ENCODE measurements at regions of chr5 and their contacts with region 1.

Region 1: DNA sequence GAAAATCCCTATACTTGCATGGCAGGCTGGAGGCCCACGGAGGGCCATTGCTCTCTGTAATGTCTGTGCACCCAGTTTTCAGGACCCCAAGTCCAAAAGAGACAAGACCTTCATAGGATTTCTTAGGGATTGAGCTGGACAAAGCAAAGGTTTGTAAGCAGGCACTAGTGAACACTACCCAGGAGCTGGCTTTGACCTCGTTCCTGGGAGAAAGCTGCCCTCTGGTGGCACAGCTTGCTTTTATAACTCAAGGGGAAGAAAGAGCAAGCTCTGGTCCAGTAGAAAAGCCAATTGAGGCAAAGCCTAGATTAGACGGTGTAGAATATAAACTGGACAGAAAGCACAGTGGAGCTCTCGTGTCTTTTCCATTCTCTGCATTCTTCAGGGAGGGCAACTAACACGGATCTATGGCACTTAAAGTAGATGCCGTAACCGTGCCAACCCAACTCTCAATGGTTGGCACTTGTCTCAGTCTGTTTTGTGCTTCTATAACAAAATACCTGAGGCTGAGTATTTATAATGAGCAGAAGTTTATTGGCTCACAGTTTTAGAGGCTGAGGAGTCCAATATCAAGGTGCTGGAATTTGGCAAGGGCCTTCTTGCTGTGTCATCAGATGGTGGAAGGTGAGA is 7.9 kb downstream of the GABRP start:
- DNase-seq: peak; percentile 49 to 74 (median 59)
- H3K4me3 ChIP-seq: no peak overlapping the region
- H3K27ac ChIP-seq: no peak overlapping the region
- H3K4me1 ChIP-seq: no peaks in the 10 kb centered on the region
- H3K27me3 ChIP-seq: peaks cover 0 to 3% (median 0%) of the 10 kb centered on the region in 5 experiments

Region 2: GRCh38 chr5:170591054-170591453 is 200.4 kb before region 1 on chr5:
- CTCF ChIA-PET with region 1: no interaction called
- POLR2A ChIA-PET with region 1: no interaction called
- DNase-seq: no peak
- H3K4me3 ChIP-seq: no peak overlapping the region
- H3K27ac ChIP-seq: no peak overlapping the region
- H3K4me1 ChIP-seq: no peaks in the 10 kb centered on the region
- H3K27me3 ChIP-seq: peaks cover 0 to 3% (median 0%) of the 10 kb centered on the region in 5 experiments

Region 3: DNA sequence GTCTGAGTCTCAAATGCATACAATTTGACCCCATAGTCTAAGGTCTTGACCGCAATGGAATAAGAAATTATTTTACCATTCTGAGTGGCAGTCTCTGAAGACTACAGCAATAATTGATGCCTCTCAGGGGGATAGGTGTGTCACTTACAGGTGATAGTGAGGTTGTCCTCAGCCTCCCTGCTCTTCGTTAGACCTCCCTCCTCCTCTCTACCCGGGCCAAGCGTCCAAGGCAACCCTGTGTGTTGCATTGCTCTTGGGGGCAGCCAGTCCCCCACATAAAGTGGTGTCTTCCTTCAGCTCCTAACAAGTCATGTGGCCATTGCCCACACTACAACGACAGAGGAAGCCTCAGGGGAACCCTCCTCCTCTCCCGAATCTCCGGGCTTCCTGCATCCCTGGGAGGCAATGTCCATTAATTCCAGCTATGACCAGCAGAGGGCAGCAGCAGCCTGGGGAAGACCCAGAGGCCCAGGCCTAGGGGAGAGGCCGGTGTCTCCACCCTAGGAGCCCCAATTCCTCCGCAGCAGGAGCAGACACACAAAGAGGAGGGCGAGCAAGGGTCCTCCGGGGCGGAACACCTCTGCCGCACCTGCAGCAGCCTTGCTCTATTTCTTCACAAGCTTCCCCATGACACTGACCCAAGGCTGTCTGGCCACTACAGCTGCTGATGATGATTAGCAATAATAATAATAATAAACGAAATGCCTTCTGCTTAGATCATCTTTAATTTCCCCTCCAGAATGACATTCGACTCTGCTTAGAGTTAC is 152.8 kb before region 1 on chr5:
- CTCF ChIA-PET with region 1: interaction called, 78 read pairs
- POLR2A ChIA-PET with region 1: no interaction called
- DNase-seq: peak; percentile 53 to 73 (median 64)
- H3K4me3 ChIP-seq: no peak overlapping the region
- H3K27ac ChIP-seq: no peak overlapping the region
- H3K4me1 ChIP-seq: peaks cover 0 to 16% (median 5%) of the 10 kb centered on the region in 4 experiments
- H3K27me3 ChIP-seq: peaks cover 0 to 3% (median 0%) of the 10 kb centered on the region in 5 experiments

Region 4: GRCh38 chr5:170747851-170748250 is 43.6 kb before region 1 on chr5:
- CTCF ChIA-PET with region 1: interaction called, 50 read pairs
- POLR2A ChIA-PET with region 1: no interaction called
- DNase-seq: peak in 1 of 3 donors; percentile 8
- H3K4me3 ChIP-seq: no peak overlapping the region
- H3K27ac ChIP-seq: no peak overlapping the region
- H3K4me1 ChIP-seq: peaks cover 0 to 10% (median 4%) of the 10 kb centered on the region in 4 experiments
- H3K27me3 ChIP-seq: peaks cover 10 to 65% (median 25%) of the 10 kb centered on the region in 5 experiments

Region 5: GRCh38 chr5:170809551-170809950 is 18.1 kb after region 1 on chr5:
- CTCF ChIA-PET with region 1: no interaction called
- POLR2A ChIA-PET with region 1: no interaction called
- DNase-seq: peak; percentile 25 to 47 (median 43)
- H3K4me3 ChIP-seq: no peak overlapping the region
- H3K27ac ChIP-seq: no peak overlapping the region
- H3K4me1 ChIP-seq: no peaks in the 10 kb centered on the region
- H3K27me3 ChIP-seq: no peaks in the 10 kb centered on the region

Region 6: GRCh38 chr5:170880084-170880483 is 88.6 kb after region 1 on chr5:
- CTCF ChIA-PET with region 1: no interaction called
- POLR2A ChIA-PET with region 1: no interaction called
- DNase-seq: no peak
- H3K4me3 ChIP-seq: no peak overlapping the region
- H3K27ac ChIP-seq: no peak overlapping the region
- H3K4me1 ChIP-seq: no peaks in the 10 kb centered on the region
- H3K27me3 ChIP-seq: no peaks in the 10 kb centered on the region

Region 7: DNA sequence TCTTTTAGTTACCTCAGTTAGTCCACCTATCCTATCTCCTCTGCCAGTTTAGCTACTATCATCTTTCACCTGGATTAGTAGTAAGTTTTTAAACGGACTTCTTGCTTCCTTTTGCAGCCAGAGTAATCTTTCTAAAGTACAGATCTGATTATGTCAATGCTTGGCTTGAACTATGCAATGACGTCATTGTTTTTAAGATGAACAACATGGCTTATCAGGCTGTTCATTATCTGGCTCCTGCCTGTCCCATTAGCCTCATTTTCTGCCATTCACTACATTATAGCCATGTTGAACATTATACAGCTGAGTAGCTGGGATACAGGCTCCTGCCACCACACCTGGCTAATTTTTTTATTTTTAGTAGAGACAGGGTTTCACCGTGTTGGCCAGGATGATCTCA is 169.1 kb after region 1 on chr5:
- CTCF ChIA-PET with region 1: no interaction called
- POLR2A ChIA-PET with region 1: no interaction called
- DNase-seq: no peak
- H3K4me3 ChIP-seq: no peak overlapping the region
- H3K27ac ChIP-seq: no peak overlapping the region
- H3K4me1 ChIP-seq: no peaks in the 10 kb centered on the region
- H3K27me3 ChIP-seq: no peaks in the 10 kb centered on the region